Aorta (tissue), 5 donors: ENCODE measurements at regions of chr21 and their contacts with region 1.

Region 1: GRCh38 chr21:38712071-38712470 is 93.7 kb upstream of the ETS2 start:
- DNase-seq: no peak
- ATAC-seq: no peak
- H3K4me3 ChIP-seq: no peak overlapping the region
- H3K27ac ChIP-seq: no peak overlapping the region
- H3K4me1 ChIP-seq: peaks cover 0 to 2% of the 10 kb centered on the region in 2 donors
- H3K27me3 ChIP-seq: no peaks in the 10 kb centered on the region

Region 2: DNA sequence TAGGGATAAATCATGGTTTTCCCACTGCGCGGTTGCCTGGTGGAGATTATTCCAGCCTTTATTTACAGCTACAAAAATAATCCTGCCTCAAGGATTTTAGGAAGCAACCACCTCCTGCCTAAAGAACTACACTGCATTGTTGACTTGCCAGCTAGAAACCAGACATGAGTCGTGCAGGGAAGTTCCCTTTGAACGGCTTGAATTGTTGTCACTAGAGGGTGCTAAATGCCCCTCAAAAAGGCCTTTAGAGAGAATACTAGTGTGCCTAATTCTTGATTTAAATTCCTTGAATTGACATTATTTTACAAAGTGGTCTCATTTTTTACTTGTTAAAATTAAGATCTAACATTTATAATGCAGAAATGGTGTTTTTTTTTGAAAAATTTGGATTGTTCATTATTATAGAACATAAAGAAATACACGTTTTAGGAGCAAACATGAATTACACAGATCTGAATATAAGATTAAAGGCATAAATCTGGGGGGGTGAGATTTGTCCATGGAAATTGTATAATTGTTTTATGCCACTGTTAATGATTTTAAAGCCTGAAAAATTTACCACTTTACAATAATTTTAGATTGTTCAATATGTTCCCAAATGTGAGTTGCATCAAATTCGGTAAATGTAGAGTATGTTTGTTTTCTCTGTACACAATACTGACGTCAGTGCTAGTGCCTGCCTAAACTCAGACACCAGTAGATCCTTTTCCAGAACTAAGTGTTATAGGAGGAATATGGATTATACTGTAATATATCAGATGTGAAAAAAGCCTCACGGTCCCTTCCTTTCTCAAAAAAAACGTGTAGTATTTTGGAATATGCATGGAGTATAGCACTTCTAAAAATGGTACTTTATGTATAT is 206.2 kb before region 1 on chr21:
- intact Hi-C with region 1: loop called (anchors 2 to 5 kb)
- DNase-seq: no peak
- ATAC-seq: peak; percentile 86
- H3K4me3 ChIP-seq: peak overlapping the region; percentile 58 to 65
- H3K27ac ChIP-seq: peak overlapping the region in 1 of 2 donors; percentile 69
- H3K4me1 ChIP-seq: peaks cover 0 to 7% of the 10 kb centered on the region in 2 donors
- H3K27me3 ChIP-seq: no peaks in the 10 kb centered on the region

Region 3: GRCh38 chr21:38658511-38658910 is 53.6 kb before region 1 on chr21:
- intact Hi-C with region 1: no loop called
- DNase-seq: no peak
- ATAC-seq: no peak
- H3K4me3 ChIP-seq: peak overlapping the region; percentile 35 to 60
- H3K27ac ChIP-seq: peak overlapping the region; percentile 78 to 89
- H3K4me1 ChIP-seq: peaks cover 2 to 8% of the 10 kb centered on the region in 2 donors
- H3K27me3 ChIP-seq: no peaks in the 10 kb centered on the region

Region 4: DNA sequence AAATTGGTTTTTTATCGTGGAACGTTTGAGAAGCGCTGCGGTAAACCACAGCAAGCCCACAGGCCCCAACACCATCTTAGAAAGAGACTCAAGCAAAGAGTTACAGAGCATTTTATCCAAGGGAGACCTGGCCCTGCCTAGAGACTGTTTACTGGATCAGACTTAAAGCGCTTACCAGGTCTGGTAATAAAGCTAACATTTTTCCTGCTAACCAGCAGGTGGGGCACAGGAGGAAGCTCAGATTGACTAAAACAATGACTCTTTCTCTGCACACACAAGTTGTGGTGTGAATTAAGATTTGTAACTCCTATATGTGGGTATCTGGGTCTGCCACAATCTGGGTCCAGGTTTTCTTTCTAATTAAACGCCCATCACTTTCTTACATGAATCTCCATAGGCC is 42.9 kb before region 1 on chr21:
- intact Hi-C with region 1: loop called in 1 of 2 experiments (anchors 5 kb)
- DNase-seq: no peak
- ATAC-seq: no peak
- H3K4me3 ChIP-seq: no peak overlapping the region
- H3K27ac ChIP-seq: no peak overlapping the region
- H3K4me1 ChIP-seq: peaks cover 0 to 7% of the 10 kb centered on the region in 2 donors
- H3K27me3 ChIP-seq: no peaks in the 10 kb centered on the region

Region 5: GRCh38 chr21:38679531-38679930 is 32.5 kb before region 1 on chr21:
- intact Hi-C with region 1: loop called in 1 of 2 experiments (anchors 5 kb)
- DNase-seq: no peak
- ATAC-seq: peak; percentile 62
- H3K4me3 ChIP-seq: no peak overlapping the region
- H3K27ac ChIP-seq: peak overlapping the region; percentile 46 to 47
- H3K4me1 ChIP-seq: peaks cover 5 to 6% of the 10 kb centered on the region in 2 donors
- H3K27me3 ChIP-seq: no peaks in the 10 kb centered on the region